MCF 10A (cell line): ENCODE measurements at regions of chr1 and their contacts with region 1.

Region 1: GRCh38 chr1:157691285-157691920 is 9.2 kb downstream of the FCRL3 start:
- DNase-seq: peak; percentile 58
- H3K4me3 Mint-ChIP-seq: no peak overlapping the region
- H3K27ac Mint-ChIP-seq: no peak overlapping the region
- H3K4me1 Mint-ChIP-seq: no peaks in the 10 kb centered on the region
- H3K27me3 Mint-ChIP-seq: peaks cover 48% of the 10 kb centered on the region
- CTCF ChIP-seq: peak; percentile 62

Region 2: GRCh38 chr1:157580179-157580827 is 111.1 kb before region 1 on chr1:
- CTCF ChIA-PET with region 1: interaction called, 142 read pairs
- POLR2A ChIA-PET with region 1: no interaction called
- intact Hi-C with region 1: loop called (anchors 1 kb)
- DNase-seq: peak; percentile 85
- H3K4me3 Mint-ChIP-seq: no peak overlapping the region
- H3K27ac Mint-ChIP-seq: no peak overlapping the region
- H3K4me1 Mint-ChIP-seq: no peaks in the 10 kb centered on the region
- H3K27me3 Mint-ChIP-seq: peaks cover 62% of the 10 kb centered on the region
- CTCF ChIP-seq: peak; percentile 82

Region 3: GRCh38 chr1:157648317-157648716 is 43.1 kb before region 1 on chr1:
- CTCF ChIA-PET with region 1: interaction called, 12 read pairs
- POLR2A ChIA-PET with region 1: no interaction called
- intact Hi-C with region 1: no loop called
- DNase-seq: no peak
- H3K4me3 Mint-ChIP-seq: no peak overlapping the region
- H3K27ac Mint-ChIP-seq: no peak overlapping the region
- H3K4me1 Mint-ChIP-seq: no peaks in the 10 kb centered on the region
- H3K27me3 Mint-ChIP-seq: peaks cover 79% of the 10 kb centered on the region
- CTCF ChIP-seq: no peak

Region 4: DNA sequence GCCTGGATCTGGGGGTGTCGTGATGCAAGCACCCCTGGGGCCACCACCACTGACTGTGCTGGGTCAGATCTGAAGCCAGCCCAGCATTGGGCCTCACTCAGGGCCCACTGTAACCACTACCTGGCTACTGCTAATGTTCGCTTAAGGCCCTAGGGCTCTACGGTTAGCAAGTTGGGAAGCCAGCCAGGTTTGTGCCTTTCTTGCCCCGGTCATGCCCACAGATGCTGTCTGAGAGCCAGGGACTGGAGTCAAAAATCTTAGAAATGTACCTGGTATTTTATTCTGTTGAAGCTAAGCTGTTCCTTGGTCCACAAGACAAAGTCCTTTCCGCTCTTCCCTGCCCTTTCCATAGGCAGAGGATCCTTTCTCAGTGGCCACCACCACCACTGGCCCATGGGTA is 24.3 kb after region 1 on chr1:
- CTCF ChIA-PET with region 1: interaction called, 17 read pairs
- POLR2A ChIA-PET with region 1: no interaction called
- intact Hi-C with region 1: no loop called
- DNase-seq: no peak
- H3K4me3 Mint-ChIP-seq: no peak overlapping the region
- H3K27ac Mint-ChIP-seq: no peak overlapping the region
- H3K4me1 Mint-ChIP-seq: no peaks in the 10 kb centered on the region
- H3K27me3 Mint-ChIP-seq: peaks cover 60% of the 10 kb centered on the region
- CTCF ChIP-seq: no peak